Endothelial cell of umbilical vein (primary cell): ENCODE measurements at regions of chr2 and their contacts with region 1.

Region 1: DNA sequence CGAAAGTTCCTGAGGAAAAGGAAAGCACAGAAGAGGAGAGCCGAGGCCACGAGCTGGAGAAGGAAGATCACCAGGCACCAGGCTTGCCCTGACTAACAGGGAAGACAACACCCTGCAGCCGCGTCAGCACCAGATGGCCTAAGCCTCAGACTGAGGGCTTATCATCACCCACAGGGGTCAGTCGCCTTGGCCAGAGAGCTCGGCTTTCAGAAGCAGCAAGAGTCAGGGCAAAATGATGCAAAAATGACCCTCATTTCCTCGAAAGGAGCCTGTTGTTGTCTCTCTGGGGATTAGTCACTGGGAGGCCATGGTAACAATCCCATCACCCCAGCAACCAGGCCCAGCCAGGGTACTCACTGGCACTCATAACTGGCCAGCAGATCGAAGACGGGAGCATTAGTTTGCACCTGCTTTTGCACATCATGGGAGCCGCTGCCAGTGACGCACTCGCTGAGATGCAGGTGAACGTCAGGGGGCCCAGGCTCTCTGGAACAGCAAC is 42.7 kb upstream of the ZFP36L2 start:
- DNase-seq: peak; percentile 98
- H3K4me3 ChIP-seq: no peak overlapping the region
- H3K27ac ChIP-seq: peak overlapping the region; percentile 84
- H3K4me1 ChIP-seq: peaks cover 16% of the 10 kb centered on the region
- H3K27me3 ChIP-seq: no peaks in the 10 kb centered on the region
- CTCF ChIP-seq: peak; percentile 5 to 35
- POLR2A ChIP-seq: peak; percentile 42

Region 2: DNA sequence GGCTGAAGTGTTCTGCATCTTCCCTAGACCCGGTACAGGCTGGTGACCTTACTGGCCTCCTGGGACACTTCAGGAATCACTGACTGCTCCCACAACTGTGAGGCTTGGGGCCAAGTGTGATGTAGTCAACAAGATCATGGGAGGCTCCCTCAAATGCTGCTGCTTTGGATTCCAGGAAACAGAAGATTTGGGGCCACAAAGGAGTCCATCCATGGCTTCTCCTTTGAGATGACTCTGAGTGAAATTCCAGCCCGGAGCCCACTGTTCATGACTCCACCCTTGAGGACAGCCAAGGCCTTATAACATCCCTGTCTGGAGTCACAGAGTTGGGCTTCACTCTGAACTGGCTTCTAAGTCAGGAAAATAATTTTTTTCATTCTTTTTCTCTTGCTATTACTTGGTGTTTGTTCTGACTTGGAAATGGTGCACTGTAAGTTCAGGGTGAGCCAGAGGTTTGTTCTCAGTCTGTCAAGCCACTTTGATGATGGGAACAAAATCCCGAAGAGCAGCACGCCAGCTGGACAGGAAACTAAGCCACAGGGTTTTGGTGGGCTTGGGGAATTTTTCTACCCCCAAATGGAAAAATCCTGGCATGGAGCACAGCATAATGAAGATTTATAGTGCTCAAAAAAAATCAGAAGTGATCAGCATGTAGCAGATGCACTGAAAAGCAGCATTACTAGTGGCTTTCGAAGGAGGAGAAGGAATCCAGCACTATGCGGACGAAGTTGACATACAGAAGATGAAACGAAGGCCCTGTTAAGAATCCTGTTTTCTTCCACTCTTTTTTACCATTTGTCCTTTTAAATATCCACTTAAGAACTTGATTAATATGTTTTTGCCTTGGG is 55.4 kb after region 1 on chr2:
- CTCF ChIA-PET with region 1: no interaction called
- POLR2A ChIA-PET with region 1: no interaction called
- dilution Hi-C with region 1: no loop called
- intact Hi-C with region 1: loop called (anchors 2 kb)
- DNase-seq: peak; percentile 26
- H3K4me3 ChIP-seq: no peak overlapping the region
- H3K27ac ChIP-seq: peak overlapping the region; percentile 15
- H3K4me1 ChIP-seq: peaks cover 7% of the 10 kb centered on the region
- H3K27me3 ChIP-seq: no peaks in the 10 kb centered on the region
- CTCF ChIP-seq: no peak
- POLR2A ChIP-seq: no peak

Region 3: DNA sequence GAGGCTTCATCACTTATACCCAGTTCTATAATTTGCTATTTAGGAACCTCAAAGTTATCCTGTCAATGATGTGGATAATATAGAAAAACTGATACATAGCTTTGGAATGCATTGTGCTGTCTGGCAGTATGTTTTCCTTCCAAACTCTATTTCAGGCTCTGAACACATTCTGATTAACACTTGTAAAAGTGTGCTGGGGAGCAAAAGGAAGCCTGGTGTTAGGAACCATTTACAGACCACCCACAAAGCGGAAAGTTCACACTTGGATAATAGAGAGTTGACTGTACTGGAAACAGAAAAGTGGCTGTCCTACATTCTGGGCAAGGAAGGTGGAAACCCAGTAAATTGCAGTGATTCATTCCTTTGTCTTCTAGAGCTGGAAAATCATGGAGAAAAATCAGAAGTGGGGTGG is 71.8 kb after region 1 on chr2:
- CTCF ChIA-PET with region 1: interaction called, 4 read pairs
- POLR2A ChIA-PET with region 1: no interaction called
- dilution Hi-C with region 1: no loop called
- intact Hi-C with region 1: loop called (anchors 2 kb)
- DNase-seq: peak; percentile 93
- H3K4me3 ChIP-seq: no peak overlapping the region
- H3K27ac ChIP-seq: peak overlapping the region; percentile 87
- H3K4me1 ChIP-seq: peaks cover 50% of the 10 kb centered on the region
- H3K27me3 ChIP-seq: no peaks in the 10 kb centered on the region
- CTCF ChIP-seq: no peak
- POLR2A ChIP-seq: no peak